Caco-2 (cell line): ENCODE measurements at regions of chr3 and their contacts with region 1.

Region 1: DNA sequence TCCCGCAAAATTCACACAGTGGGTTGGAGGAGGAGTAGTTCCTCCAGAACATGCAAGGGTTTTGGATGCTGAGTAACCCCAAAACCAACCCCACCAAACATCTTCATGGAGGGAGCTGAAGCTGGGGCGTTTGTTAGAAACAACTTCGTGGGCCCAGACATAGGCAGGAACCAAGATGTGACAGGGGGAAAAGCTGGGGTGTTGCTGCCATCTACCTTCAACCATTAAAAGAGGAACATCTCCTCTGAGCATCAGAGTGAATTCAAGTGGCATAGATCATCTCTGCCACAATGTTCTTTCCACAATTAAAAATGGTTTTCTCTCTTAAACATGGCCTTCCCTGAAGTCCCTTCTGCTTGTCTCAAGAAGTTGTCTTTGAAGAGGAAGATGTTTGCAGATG is 20.5 kb downstream of the SIDT1 start:
- DNase-seq: no peak
- H3K4me3 ChIP-seq: no peak overlapping the region
- H3K4me3 Mint-ChIP-seq: no peak overlapping the region
- H3K27ac Mint-ChIP-seq: peak overlapping the region; percentile 77
- H3K4me1 ChIP-seq: peaks cover 39% of the 10 kb centered on the region
- H3K4me1 Mint-ChIP-seq: peaks cover 29% of the 10 kb centered on the region
- H3K27me3 ChIP-seq: no peaks in the 10 kb centered on the region
- H3K27me3 Mint-ChIP-seq: no peaks in the 10 kb centered on the region
- CTCF ChIP-seq: no peak

Region 2: GRCh38 chr3:113514265-113514769 is 38.5 kb before region 1 on chr3:
- CTCF ChIA-PET with region 1: interaction called, 20 read pairs
- POLR2A ChIA-PET with region 1: no interaction called
- intact Hi-C with region 1: loop called (anchors 1 kb)
- DNase-seq: peak in 1 of 2 experiments; percentile 6
- H3K4me3 ChIP-seq: peak overlapping the region; percentile 83
- H3K4me3 Mint-ChIP-seq: no peak overlapping the region
- H3K27ac Mint-ChIP-seq: no peak overlapping the region
- H3K4me1 ChIP-seq: no peaks in the 10 kb centered on the region
- H3K4me1 Mint-ChIP-seq: peaks cover 8% of the 10 kb centered on the region
- H3K27me3 ChIP-seq: no peaks in the 10 kb centered on the region
- H3K27me3 Mint-ChIP-seq: no peaks in the 10 kb centered on the region
- CTCF ChIP-seq: no peak

Region 3: GRCh38 chr3:113531826-113532697 is 20.8 kb before region 1 on chr3 and contains the start of gene SIDT1:
- CTCF ChIA-PET with region 1: no interaction called
- POLR2A ChIA-PET with region 1: no interaction called
- intact Hi-C with region 1: loop called (anchors 2 kb)
- DNase-seq: peak in 1 of 2 experiments; percentile 21
- H3K4me3 ChIP-seq: peak within 1 kb of the TSS; percentile 57
- H3K4me3 Mint-ChIP-seq: peak within 1 kb of the TSS; percentile 82
- H3K27ac Mint-ChIP-seq: peak within 1 kb of the TSS; percentile 43
- H3K4me1 ChIP-seq: no peaks in the 10 kb centered on the region
- H3K4me1 Mint-ChIP-seq: peaks cover 7% of the 10 kb centered on the region
- H3K27me3 ChIP-seq: 0 out of 2 replicates have a peak, but pooled peaks cover 3% of the 10 kb centered on the region
- H3K27me3 Mint-ChIP-seq: peaks cover 15% of the 10 kb centered on the region
- CTCF ChIP-seq: no peak
- total RNA-seq, gene SIDT1: 0.84 and 1.0 TPM in 2 replicates